Prostate gland (tissue), 2 donors: ENCODE measurements at regions of chr12 and their contacts with region 1.

Region 1: DNA sequence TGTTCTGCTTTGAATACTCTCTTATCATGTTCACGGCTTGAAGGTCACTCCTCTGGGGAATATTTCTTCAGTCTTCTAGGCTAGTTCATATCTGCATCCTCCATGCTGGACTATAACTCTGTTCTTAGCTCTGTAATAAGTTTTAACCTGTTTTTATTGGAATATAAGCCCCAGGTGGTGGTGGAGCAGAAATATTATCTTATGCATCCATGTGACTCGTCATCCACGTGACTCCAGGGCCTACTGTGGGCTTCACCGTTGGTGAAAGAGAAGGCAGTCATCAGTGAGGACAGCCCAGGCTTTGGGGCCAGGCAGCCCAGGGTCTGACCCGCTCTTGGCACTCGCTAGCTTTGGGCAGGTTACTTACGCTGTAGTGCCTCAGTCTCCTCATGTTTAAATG is 87.1 kb downstream of the ETNK1 start:
- DNase-seq: no peak
- H3K4me3 ChIP-seq: no peak overlapping the region
- H3K27ac ChIP-seq: no peak overlapping the region
- H3K4me1 ChIP-seq: no peaks in the 10 kb centered on the region
- H3K27me3 ChIP-seq: no peaks in the 10 kb centered on the region
- CTCF ChIP-seq: no peak
- POLR2A ChIP-seq: no peak

Region 2: GRCh38 chr12:22759769-22760674 is 47.9 kb after region 1 on chr12:
- intact Hi-C with region 1: no loop called
- DNase-seq: peak; percentile 30
- H3K4me3 ChIP-seq: no peak overlapping the region
- H3K27ac ChIP-seq: peak overlapping the region; percentile 67 to 70
- H3K4me1 ChIP-seq: peaks cover 5% of the 10 kb centered on the region
- H3K27me3 ChIP-seq: no peaks in the 10 kb centered on the region
- CTCF ChIP-seq: no peak
- POLR2A ChIP-seq: no peak

Region 3: DNA sequence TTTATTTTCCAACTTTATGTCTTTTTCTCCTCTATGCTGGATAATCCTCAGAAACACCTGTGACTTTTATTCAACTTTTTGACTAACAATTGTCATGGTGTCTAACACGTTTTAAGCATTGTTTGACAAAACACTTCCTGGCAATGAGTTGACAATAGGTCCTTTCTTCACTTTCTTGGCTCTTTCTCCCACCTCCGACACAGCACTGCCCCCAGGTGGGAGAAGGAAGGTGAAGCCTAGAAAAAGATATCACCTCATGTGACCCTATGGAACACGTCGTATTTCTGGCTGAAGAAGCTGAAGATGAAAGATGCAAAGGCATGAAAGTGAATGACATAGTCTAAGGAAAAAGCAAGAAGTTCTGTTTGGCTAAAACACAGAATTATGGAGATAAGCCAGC is 342.9 kb after region 1 on chr12:
- intact Hi-C with region 1: loop called (anchors 10 kb)
- DNase-seq: no peak
- H3K4me3 ChIP-seq: no peak overlapping the region
- H3K27ac ChIP-seq: no peak overlapping the region
- H3K4me1 ChIP-seq: no peaks in the 10 kb centered on the region
- H3K27me3 ChIP-seq: no peaks in the 10 kb centered on the region
- CTCF ChIP-seq: peak in 1 of 4 experiments; percentile 19
- POLR2A ChIP-seq: no peak

Region 4: DNA sequence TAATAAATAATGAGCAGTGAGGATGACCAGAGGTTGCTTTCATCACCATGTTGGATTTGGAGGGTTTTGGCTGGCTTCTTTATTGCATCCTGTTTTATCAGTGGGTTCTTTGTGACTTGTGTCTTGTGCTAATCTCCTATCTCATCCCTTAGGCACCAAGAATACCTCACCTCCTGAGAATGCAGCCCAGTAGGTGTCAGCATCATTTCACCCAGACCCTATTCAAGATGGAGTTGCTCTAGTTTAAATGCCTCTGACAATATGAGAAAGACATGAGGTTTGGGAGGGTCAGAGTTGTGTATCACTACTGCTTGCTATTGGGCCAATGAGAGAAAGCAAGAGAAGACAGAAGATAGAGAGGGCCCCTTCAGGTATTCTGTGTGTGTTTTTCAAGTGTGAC is 505.1 kb after region 1 on chr12:
- intact Hi-C with region 1: loop called (anchors 10 kb)
- DNase-seq: no peak
- H3K4me3 ChIP-seq: no peak overlapping the region
- H3K27ac ChIP-seq: no peak overlapping the region
- H3K4me1 ChIP-seq: no peaks in the 10 kb centered on the region
- H3K27me3 ChIP-seq: no peaks in the 10 kb centered on the region
- CTCF ChIP-seq: no peak
- POLR2A ChIP-seq: no peak